PC-9 (cell line): ENCODE measurements at regions of chr3 and their contacts with region 1.

Region 1: DNA sequence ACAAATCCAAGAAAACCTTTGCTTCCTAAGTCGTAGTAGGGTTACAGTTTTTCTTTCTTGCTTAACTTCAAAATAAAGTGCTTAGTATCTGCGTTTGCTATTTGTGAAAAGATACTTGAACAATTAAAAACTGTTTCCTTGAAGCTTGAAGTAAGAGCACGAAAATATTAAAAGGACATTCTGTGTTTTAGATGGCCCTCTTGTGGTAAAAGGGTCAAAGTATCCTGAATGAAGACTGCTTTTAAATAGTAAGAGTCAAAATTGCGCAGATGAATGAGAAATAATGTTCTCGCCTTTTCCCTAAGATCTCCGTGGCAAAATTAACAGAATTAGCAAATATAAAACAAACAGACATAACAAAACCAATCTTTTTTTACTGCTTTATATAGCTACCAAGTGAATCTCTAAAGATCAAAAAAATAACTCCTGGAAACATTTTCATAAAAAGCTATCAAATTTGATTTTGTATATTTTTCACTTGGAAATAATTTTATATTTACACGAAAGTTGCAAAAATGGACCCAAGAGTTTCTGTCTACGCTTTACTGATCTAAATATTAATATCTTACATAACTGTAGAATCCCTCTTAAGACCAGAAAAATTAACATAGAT is 175.4 kb downstream of the MBNL1 start:
- DNase-seq: peak in 1 of 2 experiments; percentile 63
- H3K4me3 ChIP-seq: no peak overlapping the region
- H3K27ac ChIP-seq: peak overlapping the region; percentile 10; the same call in 1 of the 2 replicates
- H3K4me1 ChIP-seq: no peaks in the 10 kb centered on the region
- H3K27me3 ChIP-seq: no peaks in the 10 kb centered on the region
- CTCF ChIP-seq: peak; percentile 87

Region 2: GRCh38 chr3:152071924-152072323 is 372.2 kb before region 1 on chr3:
- CTCF ChIA-PET with region 1: no interaction called
- POLR2A ChIA-PET with region 1: interaction called, 3 read pairs
- intact Hi-C with region 1: loop called (anchors 5 kb)
- DNase-seq: no peak
- H3K4me3 ChIP-seq: no peak overlapping the region
- H3K27ac ChIP-seq: no peak overlapping the region
- H3K4me1 ChIP-seq: no peaks in the 10 kb centered on the region
- H3K27me3 ChIP-seq: no peaks in the 10 kb centered on the region
- CTCF ChIP-seq: peak; percentile 36

Region 3: DNA sequence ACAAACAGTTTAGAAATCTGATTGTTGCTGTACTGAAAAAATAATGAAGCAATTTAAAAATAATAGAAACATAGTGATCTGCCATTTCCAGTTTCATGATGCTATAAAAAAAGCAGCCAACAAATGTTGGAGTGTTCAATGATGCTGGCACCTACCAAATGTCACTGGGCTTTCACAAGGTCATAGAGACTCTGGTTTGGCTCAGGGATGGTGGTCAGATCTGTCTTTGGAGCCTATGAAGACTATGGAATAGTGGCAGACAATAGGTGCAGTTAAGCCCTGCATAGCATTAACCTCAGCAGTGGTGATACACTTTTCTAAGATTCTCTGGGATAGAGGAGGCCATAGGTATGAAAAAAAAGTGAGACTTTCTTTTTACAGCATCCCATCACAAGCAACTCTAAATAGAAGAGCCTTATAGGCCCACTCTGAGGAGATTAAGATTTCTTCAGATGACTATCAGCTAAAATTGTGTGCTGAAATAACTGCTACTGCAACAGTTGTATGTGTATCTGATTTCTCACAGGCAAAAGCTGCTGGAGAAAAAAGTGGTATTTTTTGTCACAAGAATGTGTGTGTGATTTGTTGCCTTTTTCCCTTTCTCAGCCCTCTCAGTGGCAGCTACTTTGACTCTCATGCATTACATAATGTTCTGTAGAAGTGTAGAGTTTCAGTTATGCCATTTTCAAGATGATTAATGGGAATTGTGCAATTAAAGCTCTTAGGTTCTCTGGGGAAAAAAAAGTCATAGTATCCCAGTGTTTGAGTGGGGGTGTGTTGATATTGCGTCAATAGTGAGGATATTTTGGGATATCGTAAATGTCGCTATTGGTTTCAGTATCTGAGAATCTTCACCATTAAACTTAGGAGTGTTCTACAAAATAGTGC is 38.0 kb before region 1 on chr3:
- CTCF ChIA-PET with region 1: no interaction called
- POLR2A ChIA-PET with region 1: interaction called, 10 read pairs
- intact Hi-C with region 1: no loop called
- DNase-seq: peak in 1 of 2 experiments; percentile 83
- H3K4me3 ChIP-seq: no peak overlapping the region
- H3K27ac ChIP-seq: peak overlapping the region; percentile 53
- H3K4me1 ChIP-seq: peaks cover 11% of the 10 kb centered on the region
- H3K27me3 ChIP-seq: no peaks in the 10 kb centered on the region
- CTCF ChIP-seq: no peak

Region 4: DNA sequence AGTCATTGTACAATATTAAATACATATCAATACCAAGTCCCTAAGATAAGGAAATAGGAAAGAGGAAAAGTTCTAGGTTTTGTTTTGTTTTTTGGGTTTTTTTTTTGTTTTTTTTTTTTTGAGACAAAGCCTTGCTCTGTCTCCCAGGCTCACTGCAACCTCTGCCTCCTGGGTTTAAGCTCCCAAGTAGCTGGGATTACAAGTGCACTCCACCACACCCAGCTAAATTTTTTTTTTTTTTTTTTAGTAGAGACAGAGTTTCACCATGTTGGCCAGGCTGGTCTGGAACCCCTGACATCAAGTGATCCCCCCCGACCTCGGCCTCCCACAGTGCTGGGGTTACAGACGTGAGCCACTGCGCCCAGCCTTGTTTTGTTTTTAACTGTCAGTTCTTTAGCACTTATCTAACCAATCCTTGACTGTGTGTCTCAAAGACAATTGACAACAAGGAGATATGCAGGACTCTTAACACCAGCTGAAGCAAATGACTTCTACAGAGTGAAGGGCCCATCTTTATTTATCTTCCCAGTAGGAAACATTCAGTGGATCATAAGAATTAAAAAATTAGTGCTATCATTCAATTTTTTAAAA is 617.9 kb after region 1 on chr3:
- CTCF ChIA-PET with region 1: no interaction called
- POLR2A ChIA-PET with region 1: interaction called, 10 read pairs
- intact Hi-C with region 1: no loop called
- DNase-seq: no peak
- H3K4me3 ChIP-seq: no peak overlapping the region
- H3K27ac ChIP-seq: no peak overlapping the region
- H3K4me1 ChIP-seq: peaks cover 30% of the 10 kb centered on the region
- H3K27me3 ChIP-seq: no peaks in the 10 kb centered on the region
- CTCF ChIP-seq: no peak